ENCODE measurements at regions of chr16 and their contacts with region 1.

Region 1: DNA sequence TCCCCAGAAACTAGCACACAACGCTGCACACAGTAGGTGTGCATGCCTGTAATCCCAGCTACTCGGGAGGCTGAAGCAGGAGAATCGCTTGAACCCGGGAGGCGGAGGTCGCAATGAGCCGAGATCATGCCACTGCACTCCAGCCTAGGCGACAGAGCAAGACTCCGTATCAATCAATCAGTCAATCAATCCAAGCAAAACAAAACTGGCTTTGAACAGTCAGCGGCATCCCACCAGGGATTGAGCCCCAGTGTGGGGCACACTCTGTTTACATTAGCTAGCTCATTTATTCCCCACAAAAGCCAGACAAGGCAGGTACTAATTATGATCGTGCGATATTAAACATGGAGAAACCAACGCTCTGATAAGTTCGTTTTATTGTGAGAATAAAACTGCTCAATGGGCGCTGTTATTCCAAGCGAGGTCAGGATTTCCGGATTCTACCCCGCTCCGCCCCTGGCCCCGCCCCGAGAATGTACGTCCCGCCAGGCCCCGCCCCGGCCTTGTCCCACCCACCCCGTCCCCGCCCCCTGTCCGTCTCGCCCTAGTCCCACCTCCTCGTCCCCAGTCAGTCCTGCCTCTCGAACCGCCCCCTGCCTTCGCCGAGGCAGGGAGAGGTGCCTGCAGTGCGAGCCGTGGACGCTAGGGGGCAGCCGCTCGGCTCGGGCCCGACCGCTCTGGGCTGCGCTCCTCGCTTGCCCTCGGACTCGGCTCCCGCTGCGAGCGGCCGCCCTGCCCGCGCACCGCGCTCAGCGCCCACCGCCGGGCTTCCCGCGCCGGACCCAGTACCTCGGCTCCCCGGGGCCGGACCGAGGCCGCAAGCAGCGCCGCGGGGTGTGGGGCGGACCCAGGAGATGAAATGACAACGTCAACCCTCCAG is at the start of gene VPS4A:
- DNase-seq: peak; percentile 98
- H3K4me3 Mint-ChIP-seq: peak within 1 kb of the TSS; percentile 88
- H3K27ac Mint-ChIP-seq: peak within 1 kb of the TSS; percentile 89
- H3K4me1 Mint-ChIP-seq: peaks cover 25% of the 10 kb centered on the region
- H3K27me3 Mint-ChIP-seq: no peaks in the 10 kb centered on the region
- total RNA-seq, gene VPS4A: 32.1 to 33.0 TPM

Region 2: GRCh38 chr16:68936736-68937631 is 373.9 kb before region 1 on chr16:
- CTCF ChIA-PET with region 1: no interaction called
- POLR2A ChIA-PET with region 1: no interaction called
- intact Hi-C with region 1: no loop called
- DNase-seq: no peak
- H3K4me3 Mint-ChIP-seq: no peak overlapping the region
- H3K27ac Mint-ChIP-seq: no peak overlapping the region
- H3K4me1 Mint-ChIP-seq: no peaks in the 10 kb centered on the region
- H3K27me3 Mint-ChIP-seq: no peaks in the 10 kb centered on the region

Region 3: GRCh38 chr16:69186642-69187445 is 124.0 kb before region 1 on chr16 and contains the start of gene SNTB2:
- CTCF ChIA-PET with region 1: interaction called, 4 read pairs
- POLR2A ChIA-PET with region 1: no interaction called
- intact Hi-C with region 1: loop called (anchors 2 kb)
- DNase-seq: peak; percentile 89
- H3K4me3 Mint-ChIP-seq: peak within 1 kb of the TSS; percentile 97
- H3K27ac Mint-ChIP-seq: peak within 1 kb of the TSS; percentile 98
- H3K4me1 Mint-ChIP-seq: peaks cover 55% of the 10 kb centered on the region
- H3K27me3 Mint-ChIP-seq: no peaks in the 10 kb centered on the region
- total RNA-seq, gene SNTB2: 19.8 to 20.1 TPM

Region 4: GRCh38 chr16:69330286-69331109 is 19.6 kb after region 1 on chr16 and contains the start of gene PDF:
- CTCF ChIA-PET with region 1: interaction called, 5 read pairs
- POLR2A ChIA-PET with region 1: interaction called, 9 read pairs
- intact Hi-C with region 1: loop called (anchors 1 kb)
- DNase-seq: peak; percentile 90
- H3K4me3 Mint-ChIP-seq: peak within 1 kb of the TSS; percentile 82
- H3K27ac Mint-ChIP-seq: peak within 1 kb of the TSS; percentile 86
- H3K4me1 Mint-ChIP-seq: peaks cover 43% of the 10 kb centered on the region
- H3K27me3 Mint-ChIP-seq: no peaks in the 10 kb centered on the region
- total RNA-seq, gene PDF: 16.2 to 17.6 TPM

Region 5: GRCh38 chr16:69339289-69340108 is 28.6 kb after region 1 on chr16 and contains the starts of genes COG8 and NIP7:
- CTCF ChIA-PET with region 1: interaction called, 3 read pairs
- POLR2A ChIA-PET with region 1: no interaction called
- intact Hi-C with region 1: loop called (anchors 1 kb)
- DNase-seq: peak; percentile 96
- H3K4me3 Mint-ChIP-seq: peak within 1 kb of the TSS; percentile 96
- H3K27ac Mint-ChIP-seq: peak within 1 kb of the TSS; percentile 95
- H3K4me1 Mint-ChIP-seq: peaks cover 38% of the 10 kb centered on the region
- H3K27me3 Mint-ChIP-seq: no peaks in the 10 kb centered on the region
- total RNA-seq, gene COG8: 25.4 to 27.9 TPM
- total RNA-seq, gene NIP7: 43.3 to 47.1 TPM